Activated B cell treated with CpG ODN at 0.5 μM for 24 hours (primary cell): ENCODE measurements at regions of chr15 and their contacts with region 1.

Region 1: DNA sequence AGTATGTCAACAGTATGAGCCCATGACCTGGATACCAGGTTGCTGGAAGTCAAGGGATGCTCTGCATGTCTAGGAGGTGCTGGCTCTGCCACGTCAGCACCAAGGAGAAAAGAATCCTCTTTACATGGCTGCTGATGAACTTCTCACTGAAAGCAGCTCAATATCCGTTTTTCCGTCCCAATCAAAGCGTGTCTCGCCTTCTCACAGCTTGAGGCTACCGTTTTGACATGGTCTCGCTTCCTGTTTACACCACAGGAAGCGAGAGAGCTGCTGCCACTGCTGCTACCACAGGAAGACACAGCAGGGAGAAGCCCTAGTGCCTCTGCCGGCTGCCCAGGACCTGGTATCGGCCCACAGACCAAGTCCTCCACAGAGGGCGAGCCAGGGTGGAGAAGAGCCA is 27.3 kb downstream of the STARD5 start:
- DNase-seq: peak; percentile 56
- ATAC-seq: peak; percentile 32
- H3K4me3 Mint-ChIP-seq: peak overlapping the region; percentile 99
- H3K27ac Mint-ChIP-seq: peak overlapping the region; percentile 99
- H3K4me1 Mint-ChIP-seq: peaks cover 98% of the 10 kb centered on the region
- H3K27me3 Mint-ChIP-seq: no peaks in the 10 kb centered on the region
- CTCF ChIP-seq: no peak

Region 2: DNA sequence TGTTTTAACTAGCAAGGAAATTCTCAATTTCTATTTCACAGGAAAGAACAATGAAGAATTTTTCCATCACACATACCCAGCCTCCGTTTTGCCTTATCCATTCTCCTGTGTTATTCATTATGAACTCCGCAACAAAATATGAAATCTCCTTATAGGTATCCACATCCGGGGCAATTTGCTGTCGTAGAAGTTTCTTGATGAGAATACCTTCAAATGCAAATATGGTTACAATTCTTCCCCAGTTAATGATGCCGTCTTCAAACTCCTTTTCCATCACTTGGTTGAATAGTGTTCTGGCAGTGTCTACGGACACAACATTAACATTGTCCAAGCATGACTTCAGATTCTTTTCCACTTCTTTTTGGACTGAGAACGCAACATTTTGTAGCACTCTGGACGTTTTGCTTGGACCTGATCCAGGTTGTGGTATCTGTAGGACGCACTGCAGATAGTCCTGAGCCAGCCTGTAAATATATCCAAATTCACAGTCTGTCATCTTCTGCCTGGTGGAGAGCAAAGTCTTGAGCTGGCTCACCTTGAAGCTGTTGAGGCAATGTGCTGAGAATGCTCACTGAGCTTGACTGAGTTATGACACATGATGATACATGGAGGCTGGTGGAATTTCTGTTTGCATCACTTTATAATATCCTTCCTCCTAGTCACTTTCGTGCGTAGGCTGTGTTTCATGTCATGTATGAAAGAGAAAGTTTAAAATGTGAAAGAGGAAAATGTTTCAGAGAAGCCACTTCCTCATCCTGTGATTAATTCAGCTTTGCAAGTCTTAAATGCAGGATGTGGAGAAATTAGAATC is 1325.8 kb before region 1 on chr15 and contains the start of gene BCL2A1:
- CTCF ChIA-PET with region 1: no interaction called
- POLR2A ChIA-PET with region 1: no interaction called
- intact Hi-C with region 1: loop called (anchors 10 kb)
- DNase-seq: peak; percentile 33
- ATAC-seq: peak; percentile 83
- H3K4me3 Mint-ChIP-seq: peak within 1 kb of the TSS; percentile 89
- H3K27ac Mint-ChIP-seq: peak within 1 kb of the TSS; percentile 93
- H3K4me1 Mint-ChIP-seq: peaks cover 61% of the 10 kb centered on the region
- H3K27me3 Mint-ChIP-seq: no peaks in the 10 kb centered on the region
- CTCF ChIP-seq: no peak
- total RNA-seq, gene BCL2A1: 181 and 189 TPM in 2 replicates

Region 3: GRCh38 chr15:81000624-81001151 is 296.0 kb before region 1 on chr15 and contains the start of gene TLNRD1:
- CTCF ChIA-PET with region 1: no interaction called
- POLR2A ChIA-PET with region 1: interaction called, 30 read pairs
- intact Hi-C with region 1: loop called (anchors 1 kb)
- DNase-seq: peak; percentile 80
- ATAC-seq: peak; percentile 65
- H3K4me3 Mint-ChIP-seq: peak within 1 kb of the TSS; percentile 94
- H3K27ac Mint-ChIP-seq: peak within 1 kb of the TSS; percentile 96
- H3K4me1 Mint-ChIP-seq: peaks cover 47% of the 10 kb centered on the region
- H3K27me3 Mint-ChIP-seq: no peaks in the 10 kb centered on the region
- CTCF ChIP-seq: no peak
- total RNA-seq, gene TLNRD1: 25.7 TPM in 2 replicates

Region 4: DNA sequence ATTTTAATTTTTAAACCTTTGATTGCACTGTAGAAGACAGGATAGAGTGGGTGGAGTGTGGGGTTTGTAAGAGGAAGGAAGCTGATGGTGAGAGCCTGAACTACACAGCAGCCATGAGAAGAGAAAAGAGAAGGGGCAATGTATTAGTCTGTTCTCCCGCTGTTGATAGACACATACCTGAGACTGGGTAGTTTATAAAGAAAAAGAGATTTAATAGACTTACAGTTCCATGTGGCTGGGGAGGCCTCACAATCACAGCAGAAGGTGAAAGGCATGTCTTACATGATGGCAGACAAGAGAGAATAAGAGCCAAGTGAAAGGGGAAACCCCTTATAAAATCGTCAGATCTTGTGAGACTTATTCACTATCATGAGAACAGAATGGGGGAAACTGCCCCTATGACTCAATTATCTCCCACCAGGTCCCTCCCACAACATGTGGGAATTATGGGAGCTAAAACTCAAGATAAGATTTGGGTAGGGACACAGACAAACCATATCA is 10.0 kb before region 1 on chr15:
- CTCF ChIA-PET with region 1: interaction called, 12 read pairs
- POLR2A ChIA-PET with region 1: interaction called, 631 read pairs
- intact Hi-C with region 1: loop called (anchors 1 kb)
- DNase-seq: no peak
- ATAC-seq: peak; percentile 80
- H3K4me3 Mint-ChIP-seq: peak overlapping the region; percentile 80
- H3K27ac Mint-ChIP-seq: peak overlapping the region; percentile 96
- H3K4me1 Mint-ChIP-seq: peaks cover 76% of the 10 kb centered on the region
- H3K27me3 Mint-ChIP-seq: no peaks in the 10 kb centered on the region
- CTCF ChIP-seq: no peak

Region 5: DNA sequence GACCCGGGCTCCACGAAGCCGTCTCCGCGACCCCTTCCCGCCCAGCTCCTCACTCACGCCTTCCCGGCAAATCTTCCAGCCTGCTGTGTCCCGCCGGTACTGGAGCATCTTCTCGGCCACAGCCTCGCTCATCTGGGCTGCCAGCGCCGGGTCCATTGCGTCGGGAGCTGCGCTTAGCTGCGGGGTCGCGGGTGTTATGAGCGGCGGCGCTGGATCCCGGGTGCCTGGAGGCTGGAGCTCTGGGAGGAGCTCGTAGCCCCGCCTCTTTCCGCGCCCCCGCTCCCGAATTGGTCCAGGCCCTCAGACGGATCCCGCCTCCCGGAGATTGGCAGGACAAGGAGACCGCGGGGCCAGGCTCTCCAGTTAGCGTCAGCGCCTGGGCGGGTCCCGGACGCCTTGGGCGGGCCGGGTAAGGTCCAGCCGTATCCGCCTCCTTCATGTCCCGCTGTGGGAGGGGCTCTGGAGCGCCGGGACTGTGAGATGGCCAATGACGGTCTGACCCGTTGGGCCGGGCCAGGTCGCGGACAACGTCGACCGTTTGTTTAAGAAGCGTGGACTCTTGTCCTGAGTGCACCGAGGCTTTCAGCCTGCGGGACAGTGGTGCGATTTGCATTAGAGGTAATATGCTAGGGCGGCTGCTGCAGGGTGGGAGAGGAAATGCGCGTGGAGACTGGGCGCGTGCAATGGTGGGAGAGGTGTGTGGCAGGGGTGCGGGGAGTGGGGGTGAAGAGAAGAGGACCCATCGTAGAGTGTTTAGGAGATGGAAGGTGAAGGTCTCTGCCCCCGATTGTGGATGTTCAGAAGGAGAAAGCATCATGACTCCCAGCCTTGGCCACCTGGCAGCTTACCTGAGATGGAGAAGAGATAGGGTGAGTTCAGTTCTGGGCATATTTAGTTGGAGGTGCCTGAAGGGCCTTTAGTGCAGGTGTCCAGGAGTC is 27.5 kb after region 1 on chr15 and contains the start of gene STARD5:
- CTCF ChIA-PET with region 1: interaction called, 4 read pairs
- POLR2A ChIA-PET with region 1: interaction called, 73 read pairs
- intact Hi-C with region 1: loop called (anchors 1 kb)
- DNase-seq: peak; percentile 89
- ATAC-seq: peak; percentile 99
- H3K4me3 Mint-ChIP-seq: peak within 1 kb of the TSS; percentile 97
- H3K27ac Mint-ChIP-seq: peak within 1 kb of the TSS; percentile 80
- H3K4me1 Mint-ChIP-seq: peaks cover 35% of the 10 kb centered on the region
- H3K27me3 Mint-ChIP-seq: no peaks in the 10 kb centered on the region
- CTCF ChIP-seq: no peak
- total RNA-seq, gene STARD5: 10.5 and 14.3 TPM in 2 replicates